CD4-positive, alpha-beta T cell (primary cell): ENCODE measurements at regions of chr10 and their contacts with region 1.

Region 1: DNA sequence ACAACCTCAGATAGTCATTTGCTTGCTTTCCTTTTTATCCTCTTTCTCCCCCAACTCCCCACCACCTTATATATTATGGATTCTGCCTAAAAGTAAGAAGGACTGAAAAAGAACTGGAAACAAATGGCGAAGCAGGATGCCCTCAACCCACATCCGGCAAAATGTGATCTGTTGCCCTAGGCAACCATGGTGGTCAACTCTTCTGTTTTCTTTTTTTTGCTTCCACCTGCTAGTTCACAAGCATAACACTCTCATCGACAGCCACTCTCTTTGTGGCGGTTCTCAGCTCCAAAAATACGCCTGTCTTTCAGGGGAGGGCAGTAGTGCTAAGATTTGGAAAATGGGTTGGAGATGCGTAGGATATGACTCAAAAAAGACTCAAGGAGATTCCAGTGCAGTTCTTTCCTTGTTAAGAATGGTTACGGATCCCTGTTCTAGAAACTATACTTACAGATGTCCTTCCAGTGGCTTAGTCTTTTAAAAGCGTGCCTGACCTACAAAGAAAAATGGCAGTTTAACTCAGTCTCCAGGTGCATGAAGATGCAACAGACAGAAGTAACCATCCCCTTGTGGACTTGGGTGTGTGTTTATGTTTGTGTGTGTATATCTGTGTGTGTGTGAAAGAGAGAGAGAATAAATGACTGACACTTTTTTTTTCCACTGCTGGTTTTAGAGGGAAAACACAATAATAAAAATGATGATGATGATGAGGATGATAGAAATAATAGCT is 10.7 kb downstream of the APBB1IP start:
- DNase-seq: peak; percentile 42 to 94 (median 62)
- ATAC-seq: peak; percentile 82
- H3K4me3 ChIP-seq: peak overlapping the region; percentile 20
- H3K4me3 Mint-ChIP-seq: peak overlapping the region; percentile 84
- H3K27ac ChIP-seq: peak overlapping the region; percentile 70 to 79
- H3K27ac Mint-ChIP-seq: peak overlapping the region; percentile 94
- H3K4me1 ChIP-seq: peaks cover 66% of the 10 kb centered on the region
- H3K4me1 Mint-ChIP-seq: peaks cover 92% of the 10 kb centered on the region
- H3K27me3 ChIP-seq: no peaks in the 10 kb centered on the region
- H3K27me3 Mint-ChIP-seq: no peaks in the 10 kb centered on the region
- CTCF ChIP-seq: no peak

Region 2: GRCh38 chr10:26437637-26438461 is 11.0 kb before region 1 on chr10 and contains the start of gene APBB1IP:
- CTCF ChIA-PET with region 1: interaction called, 5 read pairs
- POLR2A ChIA-PET with region 1: interaction called, 28 read pairs
- intact Hi-C with region 1: loop called in 1 of 2 experiments (anchors 1 kb)
- DNase-seq: peak; percentile 19 to 81 (median 37)
- ATAC-seq: peak; percentile 47
- H3K4me3 ChIP-seq: peak within 1 kb of the TSS; percentile 91
- H3K4me3 Mint-ChIP-seq: peak within 1 kb of the TSS; percentile 98
- H3K27ac ChIP-seq: peak within 1 kb of the TSS; percentile 69 to 91
- H3K27ac Mint-ChIP-seq: peak within 1 kb of the TSS; percentile 97
- H3K4me1 ChIP-seq: peaks cover 38% of the 10 kb centered on the region
- H3K4me1 Mint-ChIP-seq: peaks cover 61% of the 10 kb centered on the region
- H3K27me3 ChIP-seq: no peaks in the 10 kb centered on the region
- H3K27me3 Mint-ChIP-seq: no peaks in the 10 kb centered on the region
- CTCF ChIP-seq: no peak
- total RNA-seq, gene APBB1IP: 44.5 to 45.6 TPM

Region 3: GRCh38 chr10:26468700-26469099 is 19.8 kb after region 1 on chr10:
- CTCF ChIA-PET with region 1: interaction called, 20 read pairs
- POLR2A ChIA-PET with region 1: interaction called, 22 read pairs
- intact Hi-C with region 1: loop called (anchors 2 kb)
- DNase-seq: peak; percentile 33 to 83 (median 54)
- ATAC-seq: peak; percentile 86
- H3K4me3 ChIP-seq: peak overlapping the region; percentile 10
- H3K4me3 Mint-ChIP-seq: peak overlapping the region; percentile 84
- H3K27ac ChIP-seq: peak overlapping the region; percentile 13 to 38
- H3K27ac Mint-ChIP-seq: peak overlapping the region; percentile 90
- H3K4me1 ChIP-seq: peaks cover 82% of the 10 kb centered on the region
- H3K4me1 Mint-ChIP-seq: peaks cover 96% of the 10 kb centered on the region
- H3K27me3 ChIP-seq: no peaks in the 10 kb centered on the region
- H3K27me3 Mint-ChIP-seq: no peaks in the 10 kb centered on the region
- CTCF ChIP-seq: no peak

Region 4: GRCh38 chr10:26474026-26474425 is 25.2 kb after region 1 on chr10:
- CTCF ChIA-PET with region 1: interaction called, 20 read pairs
- POLR2A ChIA-PET with region 1: interaction called, 22 read pairs
- intact Hi-C with region 1: loop called (anchors 2 kb)
- DNase-seq: peak in 1 of 14 experiments; percentile 30
- ATAC-seq: no peak
- H3K4me3 ChIP-seq: no peak overlapping the region
- H3K4me3 Mint-ChIP-seq: peak overlapping the region; percentile 65
- H3K27ac ChIP-seq: peak overlapping the region; percentile 72 to 90
- H3K27ac Mint-ChIP-seq: peak overlapping the region; percentile 97
- H3K4me1 ChIP-seq: peaks cover 88% of the 10 kb centered on the region
- H3K4me1 Mint-ChIP-seq: peaks cover 84% of the 10 kb centered on the region
- H3K27me3 ChIP-seq: no peaks in the 10 kb centered on the region
- H3K27me3 Mint-ChIP-seq: no peaks in the 10 kb centered on the region
- CTCF ChIP-seq: no peak

Region 5: DNA sequence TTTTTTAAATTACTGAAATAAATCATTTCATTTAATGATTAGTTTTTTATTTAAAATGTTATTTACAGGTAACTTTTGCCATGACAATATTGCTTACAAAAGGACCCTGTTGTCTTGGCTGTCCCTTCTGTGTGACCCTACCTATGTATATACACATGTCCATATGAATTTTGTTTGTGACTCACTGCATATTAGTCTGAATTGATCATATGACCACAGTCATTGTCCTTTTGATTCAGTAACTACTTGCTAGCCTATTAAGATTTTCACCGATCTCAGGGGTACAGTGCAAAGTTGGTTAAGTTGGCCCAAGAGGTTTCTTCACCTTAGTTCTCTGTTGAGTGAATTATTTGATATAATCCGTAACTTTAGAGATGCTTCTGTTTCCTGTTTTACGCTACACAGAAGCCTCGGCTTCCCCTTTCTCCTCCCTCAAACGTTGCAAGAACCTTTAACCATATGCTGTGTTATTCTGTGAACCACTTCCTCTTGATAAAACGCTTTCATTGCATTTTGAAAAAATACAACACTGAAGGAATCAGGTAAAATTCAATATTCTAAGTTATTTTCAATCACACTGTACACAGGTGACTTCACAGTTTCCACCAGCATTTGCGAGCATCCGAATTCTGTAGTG is 33.2 kb after region 1 on chr10:
- CTCF ChIA-PET with region 1: interaction called, 3 read pairs
- POLR2A ChIA-PET with region 1: interaction called, 13 read pairs
- intact Hi-C with region 1: loop called (anchors 1 to 2 kb)
- DNase-seq: peak in 11 of 14 experiments; percentile 21 to 89 (median 47)
- ATAC-seq: peak; percentile 73
- H3K4me3 ChIP-seq: peak overlapping the region; percentile 27
- H3K4me3 Mint-ChIP-seq: peak overlapping the region; percentile 47
- H3K27ac ChIP-seq: peak overlapping the region; percentile 66 to 71
- H3K27ac Mint-ChIP-seq: peak overlapping the region; percentile 88
- H3K4me1 ChIP-seq: peaks cover 78% of the 10 kb centered on the region
- H3K4me1 Mint-ChIP-seq: peaks cover 79% of the 10 kb centered on the region
- H3K27me3 ChIP-seq: no peaks in the 10 kb centered on the region
- H3K27me3 Mint-ChIP-seq: no peaks in the 10 kb centered on the region
- CTCF ChIP-seq: no peak

Region 6: DNA sequence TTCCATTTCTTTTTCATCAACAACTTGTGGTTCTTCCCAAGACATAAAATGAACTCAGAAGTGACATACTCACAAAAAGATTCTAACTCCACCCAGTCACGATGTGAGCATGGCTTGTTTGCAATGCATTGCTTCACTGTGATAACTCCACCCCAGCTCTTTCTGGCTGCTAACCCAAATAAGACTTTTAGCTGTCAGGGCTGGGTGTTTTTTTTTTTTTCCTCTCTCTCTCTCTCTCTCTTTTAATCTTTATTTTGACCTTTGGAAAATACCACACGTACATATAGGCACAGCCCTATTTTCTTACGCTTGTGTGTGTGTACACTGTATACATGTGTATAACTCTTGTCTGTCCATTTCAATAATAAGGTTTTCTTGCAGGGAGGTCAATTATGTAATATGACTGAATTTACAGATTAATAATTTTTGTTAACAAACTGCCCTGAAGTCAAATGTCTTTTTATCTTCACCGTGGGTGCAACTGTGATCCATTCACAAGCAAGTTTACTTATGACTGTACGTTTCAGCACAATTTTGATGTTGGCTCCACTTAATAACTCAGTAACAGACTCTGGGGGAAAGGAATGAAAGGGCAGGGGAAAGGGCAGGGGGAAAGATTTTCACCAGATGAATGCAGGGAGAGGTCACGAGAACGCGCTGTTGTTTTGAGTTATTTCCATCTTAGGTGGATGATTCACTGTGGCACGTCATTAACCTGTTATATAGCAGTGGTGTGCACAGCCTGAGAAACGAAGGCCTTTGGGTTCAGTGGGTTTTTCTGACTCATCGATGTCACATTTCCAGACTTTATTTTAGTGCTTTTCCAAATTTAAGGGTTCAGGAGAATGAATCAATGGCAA is 38.4 kb after region 1 on chr10:
- CTCF ChIA-PET with region 1: interaction called, 4 read pairs
- POLR2A ChIA-PET with region 1: interaction called, 4 read pairs
- intact Hi-C with region 1: loop called (anchors 1 to 2 kb)
- DNase-seq: peak; percentile 37 to 89 (median 52)
- ATAC-seq: peak; percentile 77
- H3K4me3 ChIP-seq: peak overlapping the region; percentile 18
- H3K4me3 Mint-ChIP-seq: peak overlapping the region; percentile 62
- H3K27ac ChIP-seq: peak overlapping the region; percentile 82 to 87
- H3K27ac Mint-ChIP-seq: peak overlapping the region; percentile 94
- H3K4me1 ChIP-seq: peaks cover 58% of the 10 kb centered on the region
- H3K4me1 Mint-ChIP-seq: peaks cover 70% of the 10 kb centered on the region
- H3K27me3 ChIP-seq: no peaks in the 10 kb centered on the region
- H3K27me3 Mint-ChIP-seq: no peaks in the 10 kb centered on the region
- CTCF ChIP-seq: no peak

Region 7: GRCh38 chr10:26540601-26541000 is 91.7 kb after region 1 on chr10:
- CTCF ChIA-PET with region 1: no interaction called
- POLR2A ChIA-PET with region 1: no interaction called
- intact Hi-C with region 1: loop called in 1 of 2 experiments (anchors 5 kb)
- DNase-seq: peak in 3 of 14 experiments; percentile 16 to 26 (median 22)
- ATAC-seq: no peak
- H3K4me3 ChIP-seq: no peak overlapping the region
- H3K4me3 Mint-ChIP-seq: no peak overlapping the region
- H3K27ac ChIP-seq: no peak overlapping the region
- H3K27ac Mint-ChIP-seq: peak overlapping the region; percentile 77
- H3K4me1 ChIP-seq: peaks cover 14% of the 10 kb centered on the region
- H3K4me1 Mint-ChIP-seq: peaks cover 8% of the 10 kb centered on the region
- H3K27me3 ChIP-seq: no peaks in the 10 kb centered on the region
- H3K27me3 Mint-ChIP-seq: no peaks in the 10 kb centered on the region
- CTCF ChIP-seq: no peak